ENCODE measurements at regions of chr16 and their contacts with region 1.

Region 1: DNA sequence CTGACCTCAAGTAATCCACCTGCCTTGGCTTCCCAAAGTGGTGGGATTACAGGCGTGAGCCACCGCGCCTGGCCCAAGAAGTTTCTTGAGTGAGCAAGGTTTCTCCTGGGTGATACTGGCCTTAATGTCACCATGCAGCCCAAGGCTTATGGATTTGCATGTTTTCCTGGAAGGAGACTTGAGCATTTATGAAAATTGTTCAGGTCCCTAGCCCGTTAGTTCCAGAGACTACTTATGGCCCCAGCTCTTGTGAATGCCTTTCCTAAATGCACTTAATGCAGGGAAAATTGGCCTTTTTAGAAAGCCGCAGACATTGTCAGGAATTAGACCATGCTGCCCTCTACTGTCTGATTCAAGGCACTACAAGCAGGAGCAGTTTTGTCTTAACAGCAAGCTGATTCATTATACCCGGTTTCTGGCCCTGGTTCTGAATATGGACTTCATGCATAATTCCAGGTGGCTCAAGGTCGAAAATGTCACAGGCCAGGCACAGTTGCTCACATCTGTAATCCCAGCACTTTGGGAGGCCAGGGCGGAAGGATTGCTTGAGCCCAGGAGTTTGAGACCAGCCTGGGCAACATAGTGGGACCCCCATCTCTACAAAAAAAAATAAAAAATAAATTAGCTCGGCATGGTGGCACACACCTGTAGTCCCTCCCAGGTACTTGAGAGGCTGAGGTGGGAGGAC is 91.3 kb downstream of the SNX29 start:
- H3K4me3 Mint-ChIP-seq: no peak overlapping the region
- H3K27ac Mint-ChIP-seq: peak overlapping the region; percentile 17
- H3K4me1 Mint-ChIP-seq: peaks cover 55% of the 10 kb centered on the region
- H3K27me3 Mint-ChIP-seq: no peaks in the 10 kb centered on the region

Region 2: GRCh38 chr16:11949527-11949926 is 118.3 kb before region 1 on chr16:
- intact Hi-C with region 1: loop called (anchors 1 kb)
- H3K4me3 Mint-ChIP-seq: no peak overlapping the region
- H3K27ac Mint-ChIP-seq: no peak overlapping the region
- H3K4me1 Mint-ChIP-seq: no peaks in the 10 kb centered on the region
- H3K27me3 Mint-ChIP-seq: no peaks in the 10 kb centered on the region

Region 3: GRCh38 chr16:11972128-11972527 is 95.7 kb before region 1 on chr16:
- intact Hi-C with region 1: loop called (anchors 2 kb)
- H3K4me3 Mint-ChIP-seq: no peak overlapping the region
- H3K27ac Mint-ChIP-seq: no peak overlapping the region
- H3K4me1 Mint-ChIP-seq: peaks cover 18% of the 10 kb centered on the region
- H3K27me3 Mint-ChIP-seq: no peaks in the 10 kb centered on the region

Region 4: GRCh38 chr16:12089492-12090150 is 21.8 kb after region 1 on chr16:
- intact Hi-C with region 1: no loop called
- H3K4me3 Mint-ChIP-seq: peak overlapping the region; percentile 18
- H3K27ac Mint-ChIP-seq: peak overlapping the region; percentile 47
- H3K4me1 Mint-ChIP-seq: peaks cover 36% of the 10 kb centered on the region
- H3K27me3 Mint-ChIP-seq: no peaks in the 10 kb centered on the region

Region 5: GRCh38 chr16:12426122-12426521 is 358.3 kb after region 1 on chr16:
- intact Hi-C with region 1: no loop called
- H3K4me3 Mint-ChIP-seq: no peak overlapping the region
- H3K27ac Mint-ChIP-seq: no peak overlapping the region
- H3K4me1 Mint-ChIP-seq: peaks cover 12% of the 10 kb centered on the region
- H3K27me3 Mint-ChIP-seq: no peaks in the 10 kb centered on the region